Calu3 (cell line): ENCODE measurements at regions of chr20 and their contacts with region 1.

Region 1: DNA sequence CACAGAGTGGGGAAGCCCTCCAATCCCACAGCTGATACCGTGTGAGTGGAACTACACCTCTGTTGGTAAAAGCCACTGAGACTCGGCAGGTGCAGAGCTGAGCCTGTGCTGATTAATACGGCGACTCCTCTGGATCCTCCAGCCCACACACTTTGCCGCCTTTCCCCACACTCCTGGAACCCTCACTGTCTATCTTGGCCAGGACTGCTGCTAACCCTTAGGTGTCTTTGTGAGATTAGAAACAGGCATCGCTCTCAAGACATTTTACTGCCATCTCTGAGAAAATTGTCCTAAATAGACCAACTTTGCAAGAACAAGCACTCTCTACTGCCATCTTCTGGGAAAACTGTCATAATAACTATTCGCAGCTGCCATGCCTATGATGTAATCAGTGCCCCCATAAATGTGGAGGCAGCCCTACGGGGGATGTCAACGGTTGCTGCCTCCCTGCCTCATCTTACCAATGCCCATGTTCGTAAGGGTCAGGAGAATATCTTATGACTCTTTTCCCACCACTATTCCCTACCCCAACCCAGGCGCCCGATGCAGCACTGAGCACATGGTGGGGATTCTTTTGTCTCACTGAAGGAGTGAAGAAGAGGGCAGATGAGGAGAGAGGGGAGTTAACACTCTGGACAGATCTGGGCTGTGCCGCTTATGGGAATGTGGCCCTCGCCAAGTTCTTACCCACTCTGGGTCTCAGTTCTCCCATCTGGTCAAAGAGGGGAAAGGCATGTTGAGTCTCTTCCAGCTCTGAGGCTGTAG is 26.1 kb upstream of the KCNB1 start:
- DNase-seq: peak; percentile 32
- H3K4me3 Mint-ChIP-seq: no peak overlapping the region
- H3K27ac Mint-ChIP-seq: no peak overlapping the region
- H3K4me1 Mint-ChIP-seq: no peaks in the 10 kb centered on the region
- H3K27me3 Mint-ChIP-seq: peaks cover 1% of the 10 kb centered on the region
- CTCF ChIP-seq: peak; percentile 75

Region 2: GRCh38 chr20:49338061-49338460 is 170.6 kb before region 1 on chr20:
- CTCF ChIA-PET with region 1: interaction called, 3 read pairs
- intact Hi-C with region 1: loop called (anchors 2 kb)
- DNase-seq: no peak
- H3K4me3 Mint-ChIP-seq: no peak overlapping the region
- H3K27ac Mint-ChIP-seq: no peak overlapping the region
- H3K4me1 Mint-ChIP-seq: no peaks in the 10 kb centered on the region
- H3K27me3 Mint-ChIP-seq: peaks cover 62% of the 10 kb centered on the region
- CTCF ChIP-seq: no peak

Region 3: DNA sequence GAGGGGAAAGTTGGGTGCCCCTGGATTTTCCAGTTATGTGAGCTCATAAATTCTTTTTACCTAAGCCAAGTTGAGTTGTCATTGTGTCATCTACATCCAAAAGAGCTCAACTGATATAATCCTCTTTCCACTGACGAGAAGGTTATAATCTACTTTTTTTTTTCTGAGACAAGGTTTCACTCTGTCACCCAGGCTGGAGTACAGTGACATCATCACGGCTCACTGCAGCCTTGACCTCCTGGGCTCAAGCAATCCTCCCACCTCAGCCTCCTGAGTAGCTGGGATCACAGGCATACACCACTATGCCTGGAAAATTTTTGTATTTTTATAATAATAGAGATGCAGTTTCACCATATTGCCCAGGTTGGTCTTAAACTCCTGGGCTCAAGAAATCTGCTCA is 14.8 kb before region 1 on chr20:
- CTCF ChIA-PET with region 1: no interaction called
- intact Hi-C with region 1: no loop called
- DNase-seq: no peak
- H3K4me3 Mint-ChIP-seq: no peak overlapping the region
- H3K27ac Mint-ChIP-seq: no peak overlapping the region
- H3K4me1 Mint-ChIP-seq: no peaks in the 10 kb centered on the region
- H3K27me3 Mint-ChIP-seq: peaks cover 36% of the 10 kb centered on the region
- CTCF ChIP-seq: no peak

Region 4: GRCh38 chr20:49676581-49677291 is 168.1 kb after region 1 on chr20:
- CTCF ChIA-PET with region 1: no interaction called
- intact Hi-C with region 1: no loop called
- DNase-seq: no peak
- H3K4me3 Mint-ChIP-seq: no peak overlapping the region
- H3K27ac Mint-ChIP-seq: peak overlapping the region; percentile 57
- H3K4me1 Mint-ChIP-seq: peaks cover 98% of the 10 kb centered on the region
- H3K27me3 Mint-ChIP-seq: no peaks in the 10 kb centered on the region
- CTCF ChIP-seq: no peak

Region 5: GRCh38 chr20:49768204-49769047 is 259.8 kb after region 1 on chr20:
- CTCF ChIA-PET with region 1: no interaction called
- intact Hi-C with region 1: no loop called
- DNase-seq: peak; percentile 83
- H3K4me3 Mint-ChIP-seq: peak overlapping the region; percentile 62
- H3K27ac Mint-ChIP-seq: peak overlapping the region; percentile 97
- H3K4me1 Mint-ChIP-seq: peaks cover 72% of the 10 kb centered on the region
- H3K27me3 Mint-ChIP-seq: no peaks in the 10 kb centered on the region
- CTCF ChIP-seq: no peak